Heart left ventricle (tissue), 16 donors: ENCODE measurements at regions of chr14 and their contacts with region 1.

Region 1: GRCh38 chr14:23494223-23494622 is 24.7 kb downstream of the NGDN start:
- DNase-seq: no peak
- ATAC-seq: peak in 2 of 4 donors; percentile 29 to 49
- H3K4me3 ChIP-seq: no peak overlapping the region
- H3K27ac ChIP-seq: no peak overlapping the region
- H3K4me1 ChIP-seq: no peaks in the 10 kb centered on the region
- H3K27me3 ChIP-seq: no peaks in the 10 kb centered on the region
- CTCF ChIP-seq: no peak
- POLR2A ChIP-seq: no peak

Region 2: DNA sequence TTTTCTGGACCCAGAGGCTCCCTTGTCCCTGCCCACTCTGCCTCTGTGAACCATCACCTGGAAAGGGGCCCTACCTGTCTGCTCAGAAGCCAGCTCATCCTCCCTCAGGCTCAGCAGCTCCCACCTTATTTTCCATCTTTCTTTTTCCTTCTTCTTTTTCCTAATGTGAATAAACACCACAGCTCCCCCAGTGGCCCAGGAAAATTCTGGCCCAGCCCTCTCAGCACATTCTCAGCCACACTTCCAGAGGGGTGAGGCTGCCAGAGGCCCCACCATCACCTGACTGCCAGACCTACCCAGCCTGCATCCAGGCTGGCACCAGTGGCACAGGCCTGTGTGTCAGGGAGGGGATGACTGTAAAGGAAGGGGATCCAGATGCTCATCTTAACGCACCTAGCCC is 34.3 kb after region 1 on chr14:
- intact Hi-C with region 1: loop called in 2 of 10 experiments (anchors 5 to 10 kb)
- DNase-seq: no peak
- ATAC-seq: no peak
- H3K4me3 ChIP-seq: no peak overlapping the region
- H3K27ac ChIP-seq: no peak overlapping the region
- H3K4me1 ChIP-seq: peaks cover 0 to 5% (median 0%) of the 10 kb centered on the region in 12 donors
- H3K27me3 ChIP-seq: no peaks in the 10 kb centered on the region
- CTCF ChIP-seq: no peak
- POLR2A ChIP-seq: no peak